ENCODE measurements at regions of chr5 and their contacts with region 1.

Region 1: GRCh38 chr5:160199410-160199911 is 29.8 kb upstream of the FABP6 start:
- DNase-seq: peak; percentile 84
- ATAC-seq: peak; percentile 93

Region 2: GRCh38 chr5:160011471-160011870 is 188.0 kb before region 1 on chr5:
- intact Hi-C with region 1: loop called (anchors 5 kb)
- DNase-seq: no peak
- ATAC-seq: no peak

Region 3: DNA sequence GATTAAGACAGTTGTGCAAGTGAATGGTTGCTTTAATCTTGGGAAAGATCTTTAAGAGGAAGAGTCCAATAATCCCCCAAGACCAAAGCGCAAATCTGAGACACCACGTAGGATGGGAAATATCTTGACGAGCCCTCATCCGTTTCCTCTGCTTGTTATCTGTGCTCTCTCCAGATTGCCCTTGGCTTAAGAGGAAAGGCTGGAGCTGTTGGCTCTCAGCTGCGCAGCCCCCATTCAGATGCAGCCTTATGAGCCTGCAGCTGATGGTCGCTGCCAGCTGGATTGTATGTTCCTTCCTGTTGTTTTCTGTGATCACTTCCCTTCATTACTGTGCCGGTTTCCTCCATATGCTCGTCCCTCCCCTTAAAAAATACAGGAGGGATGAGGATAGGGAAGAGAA is 127.9 kb before region 1 on chr5:
- intact Hi-C with region 1: no loop called
- DNase-seq: no peak
- ATAC-seq: no peak

Region 4: GRCh38 chr5:160269017-160269416 is 69.6 kb after region 1 on chr5:
- intact Hi-C with region 1: no loop called
- DNase-seq: peak; percentile 87
- ATAC-seq: peak; percentile 93

Region 5: DNA sequence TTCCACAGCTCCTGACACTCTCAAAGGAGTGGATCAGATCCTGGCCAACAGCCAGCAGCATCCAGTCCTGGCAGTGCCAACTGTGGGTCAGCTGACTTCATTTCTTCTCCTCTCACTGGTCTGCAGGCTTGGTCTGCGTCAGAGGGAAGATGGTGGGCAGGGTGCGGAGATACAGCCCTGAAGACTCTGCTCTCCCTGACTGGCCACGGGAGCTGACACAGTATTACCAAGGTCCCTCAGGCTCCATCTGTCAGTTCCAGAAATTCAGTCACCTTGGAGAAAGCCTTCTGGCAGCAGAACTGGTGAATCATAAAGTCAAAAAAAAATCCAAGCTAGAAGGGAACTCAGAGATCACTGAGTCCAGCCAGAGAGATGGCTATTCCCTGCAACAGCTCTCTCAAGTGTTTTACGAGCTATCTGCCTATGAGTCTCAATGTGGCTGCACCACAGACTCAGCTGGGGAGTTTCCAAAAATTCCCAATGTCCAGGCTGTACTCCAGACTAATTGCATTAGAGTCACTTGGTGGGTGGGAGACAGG is 143.0 kb after region 1 on chr5:
- intact Hi-C with region 1: loop called (anchors 5 kb)
- DNase-seq: no peak
- ATAC-seq: peak; percentile 47